B cell (primary cell): ENCODE measurements at regions of chr6 and their contacts with region 1.

Region 1: GRCh38 chr6:116100419-116101301 is at the start of gene NT5DC1:
- DNase-seq: peak; percentile 91
- ATAC-seq: peak; percentile 89
- H3K4me3 ChIP-seq: peak within 1 kb of the TSS; percentile 66 to 94 (median 85)
- H3K4me3 Mint-ChIP-seq: peak within 1 kb of the TSS; percentile 98
- H3K27ac ChIP-seq: peak within 1 kb of the TSS; percentile 73 to 76
- H3K27ac Mint-ChIP-seq: peak within 1 kb of the TSS; percentile 95
- H3K4me1 ChIP-seq: peaks cover 23 to 25% of the 10 kb centered on the region in 2 donors
- H3K4me1 Mint-ChIP-seq: peaks cover 48% of the 10 kb centered on the region
- H3K27me3 ChIP-seq: no peaks in the 10 kb centered on the region
- H3K27me3 Mint-ChIP-seq: no peaks in the 10 kb centered on the region
- CTCF ChIP-seq: peak; percentile 52
- total RNA-seq, gene NT5DC1: 54.2 and 54.8 TPM in 2 replicates

Region 2: DNA sequence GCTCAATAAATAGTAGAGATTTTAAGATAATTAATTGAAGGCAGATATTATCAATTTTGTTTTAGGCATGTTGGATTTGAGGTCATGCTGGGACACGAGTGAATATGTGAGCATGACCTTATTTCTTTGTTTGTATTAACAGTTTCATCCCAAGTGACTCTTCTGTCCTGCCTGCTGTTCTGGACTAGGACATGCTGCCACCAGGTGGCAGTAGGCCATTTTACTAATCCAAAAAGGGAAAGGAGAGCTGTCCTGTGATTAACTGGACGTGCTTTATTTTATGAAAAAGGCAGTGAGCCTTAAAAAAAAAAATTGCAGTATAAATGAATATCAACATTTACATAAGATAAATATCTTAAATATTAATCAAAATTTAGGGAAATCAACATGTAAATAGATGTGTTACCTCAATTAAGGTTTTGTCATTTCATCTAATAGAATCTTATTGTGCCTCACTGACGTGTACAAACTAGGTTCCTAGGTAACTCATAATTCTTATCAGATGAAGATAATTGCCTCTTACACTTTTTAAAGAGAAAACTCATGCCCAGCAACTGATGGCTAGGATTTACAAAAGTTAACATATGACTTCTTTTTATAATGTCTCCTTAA is 89.8 kb before region 1 on chr6:
- CTCF ChIA-PET with region 1: interaction called, 165 read pairs
- POLR2A ChIA-PET with region 1: interaction called, 5 read pairs
- intact Hi-C with region 1: loop called (anchors 1 kb)
- DNase-seq: peak; percentile 69
- ATAC-seq: peak; percentile 57
- H3K4me3 ChIP-seq: no peak overlapping the region
- H3K4me3 Mint-ChIP-seq: no peak overlapping the region
- H3K27ac ChIP-seq: no peak overlapping the region
- H3K27ac Mint-ChIP-seq: no peak overlapping the region
- H3K4me1 ChIP-seq: peaks cover 3 to 10% of the 10 kb centered on the region in 2 donors
- H3K4me1 Mint-ChIP-seq: peaks cover 21% of the 10 kb centered on the region
- H3K27me3 ChIP-seq: no peaks in the 10 kb centered on the region
- H3K27me3 Mint-ChIP-seq: peaks cover 3% of the 10 kb centered on the region
- CTCF ChIP-seq: peak; percentile 88

Region 3: GRCh38 chr6:116087437-116088027 is 13.1 kb before region 1 on chr6:
- CTCF ChIA-PET with region 1: interaction called, 17 read pairs
- POLR2A ChIA-PET with region 1: no interaction called
- intact Hi-C with region 1: no loop called
- DNase-seq: peak; percentile 45
- ATAC-seq: peak; percentile 80
- H3K4me3 ChIP-seq: no peak overlapping the region
- H3K4me3 Mint-ChIP-seq: peak overlapping the region; percentile 12
- H3K27ac ChIP-seq: no peak overlapping the region
- H3K27ac Mint-ChIP-seq: peak overlapping the region; percentile 75
- H3K4me1 ChIP-seq: peaks cover 15 to 18% of the 10 kb centered on the region in 2 donors
- H3K4me1 Mint-ChIP-seq: peaks cover 28% of the 10 kb centered on the region
- H3K27me3 ChIP-seq: no peaks in the 10 kb centered on the region
- H3K27me3 Mint-ChIP-seq: peaks cover 3% of the 10 kb centered on the region
- CTCF ChIP-seq: no peak

Region 4: DNA sequence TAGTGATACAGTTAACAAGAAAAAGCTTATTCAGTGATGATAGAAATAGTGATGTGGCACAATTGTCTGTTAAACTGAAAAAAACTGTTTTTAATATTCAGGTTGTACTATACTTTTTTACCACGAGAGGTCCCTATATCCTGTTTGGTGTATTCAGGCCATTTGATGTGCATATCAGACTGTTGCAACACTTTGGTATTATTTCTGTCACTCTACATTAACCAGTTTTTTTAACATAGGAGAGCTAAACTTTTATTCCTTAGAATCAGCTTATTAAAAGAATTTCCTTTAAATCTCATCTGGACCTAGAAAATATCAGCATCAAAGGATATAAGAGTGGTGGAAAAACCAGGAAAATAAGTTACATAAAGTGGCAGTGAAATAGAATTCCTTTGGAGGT is 116.4 kb after region 1 on chr6:
- CTCF ChIA-PET with region 1: no interaction called
- POLR2A ChIA-PET with region 1: no interaction called
- intact Hi-C with region 1: no loop called
- DNase-seq: peak; percentile 51
- ATAC-seq: no peak
- H3K4me3 ChIP-seq: no peak overlapping the region
- H3K4me3 Mint-ChIP-seq: no peak overlapping the region
- H3K27ac ChIP-seq: no peak overlapping the region
- H3K27ac Mint-ChIP-seq: no peak overlapping the region
- H3K4me1 ChIP-seq: no peaks in the 10 kb centered on the region
- H3K4me1 Mint-ChIP-seq: no peaks in the 10 kb centered on the region
- H3K27me3 ChIP-seq: no peaks in the 10 kb centered on the region
- H3K27me3 Mint-ChIP-seq: no peaks in the 10 kb centered on the region
- CTCF ChIP-seq: peak; percentile 66

Region 5: DNA sequence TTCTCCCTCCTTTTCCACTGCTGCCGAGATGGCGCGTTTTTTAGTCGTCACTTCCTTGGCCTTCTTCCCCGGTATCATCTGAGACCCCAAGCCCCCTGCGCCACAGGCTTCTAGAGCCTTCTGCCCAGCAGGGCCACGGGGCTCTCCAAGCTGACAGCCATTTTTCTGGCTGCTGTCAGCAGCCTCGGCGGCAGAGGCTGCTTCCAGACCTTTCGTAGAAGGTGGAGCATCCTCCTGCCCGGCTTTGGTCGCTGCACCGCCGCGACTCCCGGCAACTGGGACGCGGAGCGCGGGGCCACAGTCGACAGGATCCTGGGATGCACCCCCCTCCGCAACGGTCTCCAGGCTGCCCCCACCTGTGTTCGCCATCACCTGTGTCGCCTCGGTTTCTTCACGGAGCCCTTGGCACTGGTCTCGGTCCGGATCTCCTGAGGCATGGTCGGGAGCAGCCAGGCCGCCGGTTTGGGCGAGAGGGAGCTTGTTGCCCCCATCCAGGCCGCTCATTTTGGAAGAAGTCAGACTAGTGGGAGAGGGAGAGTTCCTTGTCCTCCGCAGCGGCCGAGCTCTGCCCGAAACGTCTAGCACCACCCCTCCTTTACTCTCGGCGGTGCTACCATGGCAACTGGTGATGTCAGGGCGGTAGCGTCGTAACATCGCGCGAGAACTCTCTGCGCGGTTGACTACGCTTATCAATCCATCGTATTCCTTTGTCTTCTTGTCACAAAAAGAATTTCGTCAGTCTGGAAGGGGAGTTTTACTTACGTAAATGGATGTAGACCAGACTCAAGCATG is 153.0 kb after region 1 on chr6 and contains the start of gene TSPYL4:
- CTCF ChIA-PET with region 1: no interaction called
- POLR2A ChIA-PET with region 1: interaction called, 9 read pairs
- intact Hi-C with region 1: loop called (anchors 1 kb)
- DNase-seq: peak; percentile 95
- ATAC-seq: peak; percentile 99
- H3K4me3 ChIP-seq: peak within 1 kb of the TSS; percentile 85 to 99 (median 98)
- H3K4me3 Mint-ChIP-seq: no peak within 1 kb of the TSS
- H3K27ac ChIP-seq: peak within 1 kb of the TSS; percentile 94 to 98
- H3K27ac Mint-ChIP-seq: no peak within 1 kb of the TSS
- H3K4me1 ChIP-seq: peaks cover 31 to 36% of the 10 kb centered on the region in 2 donors
- H3K4me1 Mint-ChIP-seq: peaks cover 35% of the 10 kb centered on the region
- H3K27me3 ChIP-seq: no peaks in the 10 kb centered on the region
- H3K27me3 Mint-ChIP-seq: no peaks in the 10 kb centered on the region
- CTCF ChIP-seq: no peak
- total RNA-seq, gene TSPYL4: 20.5 and 20.6 TPM in 2 replicates

Region 6: GRCh38 chr6:116570856-116571682 is 470.4 kb after region 1 on chr6 and contains the start of gene RWDD1:
- CTCF ChIA-PET with region 1: no interaction called
- POLR2A ChIA-PET with region 1: interaction called, 4 read pairs
- intact Hi-C with region 1: loop called (anchors 1 kb)
- DNase-seq: peak; percentile 99
- ATAC-seq: peak; percentile 93
- H3K4me3 ChIP-seq: peak within 1 kb of the TSS; percentile 81 to 93 (median 83)
- H3K4me3 Mint-ChIP-seq: peak within 1 kb of the TSS; percentile 97
- H3K27ac ChIP-seq: peak within 1 kb of the TSS; percentile 93 to 96
- H3K27ac Mint-ChIP-seq: peak within 1 kb of the TSS; percentile 97
- H3K4me1 ChIP-seq: peaks cover 24% of the 10 kb centered on the region in 2 donors
- H3K4me1 Mint-ChIP-seq: peaks cover 40% of the 10 kb centered on the region
- H3K27me3 ChIP-seq: no peaks in the 10 kb centered on the region
- H3K27me3 Mint-ChIP-seq: no peaks in the 10 kb centered on the region
- CTCF ChIP-seq: no peak
- total RNA-seq, gene RWDD1: 21.8 and 22.4 TPM in 2 replicates

Region 7: GRCh38 chr6:116680975-116681808 is 580.5 kb after region 1 on chr6 and contains the start of gene KPNA5:
- CTCF ChIA-PET with region 1: no interaction called
- POLR2A ChIA-PET with region 1: no interaction called
- intact Hi-C with region 1: loop called (anchors 2 kb)
- DNase-seq: peak; percentile 95
- ATAC-seq: peak; percentile 93
- H3K4me3 ChIP-seq: peak within 1 kb of the TSS; percentile 69 to 89 (median 84)
- H3K4me3 Mint-ChIP-seq: peak within 1 kb of the TSS; percentile 99
- H3K27ac ChIP-seq: peak within 1 kb of the TSS; percentile 83 to 88
- H3K27ac Mint-ChIP-seq: peak within 1 kb of the TSS; percentile 99
- H3K4me1 ChIP-seq: peaks cover 9 to 20% of the 10 kb centered on the region in 2 donors
- H3K4me1 Mint-ChIP-seq: peaks cover 45% of the 10 kb centered on the region
- H3K27me3 ChIP-seq: no peaks in the 10 kb centered on the region
- H3K27me3 Mint-ChIP-seq: no peaks in the 10 kb centered on the region
- CTCF ChIP-seq: no peak
- total RNA-seq, gene KPNA5: 41.7 and 42.9 TPM in 2 replicates